Spleen (tissue), 13 donors: ENCODE measurements at regions of chr12 and their contacts with region 1.

Region 1: GRCh38 chr12:89461649-89462612 is 62.7 kb downstream of the GALNT4 start:
- DNase-seq: no peak
- H3K4me3 ChIP-seq: peak overlapping the region in 3 of 8 donors; percentile 0 to 36 (median 22)
- H3K27ac ChIP-seq: peak overlapping the region in 7 of 8 donors; percentile 64 to 76 (median 72)
- H3K4me1 ChIP-seq: peaks cover under 1 to 38% (median 14%) of the 10 kb centered on the region in 6 donors
- H3K27me3 ChIP-seq: no peaks in the 10 kb centered on the region
- CTCF ChIP-seq: peak; percentile 16 to 88 (median 62)
- POLR2A ChIP-seq: no peak

Region 2: GRCh38 chr12:89019408-89020120 is 442.4 kb before region 1 on chr12:
- intact Hi-C with region 1: loop called (anchors 10 kb)
- DNase-seq: peak; percentile 73
- H3K4me3 ChIP-seq: peak overlapping the region in 2 of 8 donors; percentile 4 to 53
- H3K27ac ChIP-seq: no peak overlapping the region
- H3K4me1 ChIP-seq: peaks cover 5 to 22% (median 17%) of the 10 kb centered on the region in 6 donors
- H3K27me3 ChIP-seq: peaks cover 0 to 6% (median 0%) of the 10 kb centered on the region in 7 donors
- CTCF ChIP-seq: peak; percentile 77 to 93 (median 83)
- POLR2A ChIP-seq: no peak

Region 3: GRCh38 chr12:89051065-89051677 is 410.8 kb before region 1 on chr12:
- intact Hi-C with region 1: loop called (anchors 2 kb)
- DNase-seq: no peak
- H3K4me3 ChIP-seq: no peak overlapping the region
- H3K27ac ChIP-seq: peak overlapping the region in 1 of 8 donors; percentile 21
- H3K4me1 ChIP-seq: peaks cover 0 to 14% (median 8%) of the 10 kb centered on the region in 6 donors
- H3K27me3 ChIP-seq: no peaks in the 10 kb centered on the region
- CTCF ChIP-seq: peak; percentile 81 to 93 (median 88)
- POLR2A ChIP-seq: no peak

Region 4: DNA sequence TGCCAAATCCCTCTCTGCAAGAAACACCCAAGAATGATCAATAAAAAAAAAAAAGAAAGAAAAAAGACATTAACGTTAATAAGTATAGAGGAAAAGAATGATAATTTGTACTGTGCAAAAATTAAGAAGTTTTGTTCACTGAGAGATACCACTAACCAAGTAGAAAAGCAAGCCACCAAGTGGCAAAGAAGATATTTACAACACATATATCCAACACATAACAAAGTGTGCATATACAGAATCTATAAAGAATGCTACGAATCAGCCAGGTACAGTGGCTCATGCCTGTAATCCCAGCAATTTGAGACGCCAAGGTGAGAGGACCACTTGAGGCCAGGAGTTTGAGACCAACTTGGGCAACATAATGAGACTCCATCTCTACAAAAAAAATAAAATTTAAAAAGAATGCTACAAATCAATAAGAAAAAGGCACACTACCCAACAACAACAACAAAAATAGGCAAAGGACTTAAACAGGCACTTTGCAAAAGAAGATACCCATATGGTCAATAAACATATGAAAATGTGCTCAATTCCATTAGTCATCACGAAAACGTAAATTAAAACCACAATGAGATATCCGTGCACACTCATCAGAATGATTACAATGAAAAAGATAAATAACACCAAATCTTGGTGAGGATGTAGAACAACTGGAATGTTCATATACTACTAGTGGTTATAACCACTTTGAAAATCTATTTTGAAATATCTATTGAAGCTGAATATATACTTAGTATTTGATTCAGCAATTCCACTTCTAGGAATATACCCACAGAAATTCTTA is 42.8 kb after region 1 on chr12:
- intact Hi-C with region 1: no loop called
- DNase-seq: no peak
- H3K4me3 ChIP-seq: no peak overlapping the region
- H3K27ac ChIP-seq: no peak overlapping the region
- H3K4me1 ChIP-seq: no peaks in the 10 kb centered on the region
- H3K27me3 ChIP-seq: no peaks in the 10 kb centered on the region
- CTCF ChIP-seq: no peak
- POLR2A ChIP-seq: no peak